ENCODE measurements at regions of chr1 and their contacts with region 1.

Region 1: DNA sequence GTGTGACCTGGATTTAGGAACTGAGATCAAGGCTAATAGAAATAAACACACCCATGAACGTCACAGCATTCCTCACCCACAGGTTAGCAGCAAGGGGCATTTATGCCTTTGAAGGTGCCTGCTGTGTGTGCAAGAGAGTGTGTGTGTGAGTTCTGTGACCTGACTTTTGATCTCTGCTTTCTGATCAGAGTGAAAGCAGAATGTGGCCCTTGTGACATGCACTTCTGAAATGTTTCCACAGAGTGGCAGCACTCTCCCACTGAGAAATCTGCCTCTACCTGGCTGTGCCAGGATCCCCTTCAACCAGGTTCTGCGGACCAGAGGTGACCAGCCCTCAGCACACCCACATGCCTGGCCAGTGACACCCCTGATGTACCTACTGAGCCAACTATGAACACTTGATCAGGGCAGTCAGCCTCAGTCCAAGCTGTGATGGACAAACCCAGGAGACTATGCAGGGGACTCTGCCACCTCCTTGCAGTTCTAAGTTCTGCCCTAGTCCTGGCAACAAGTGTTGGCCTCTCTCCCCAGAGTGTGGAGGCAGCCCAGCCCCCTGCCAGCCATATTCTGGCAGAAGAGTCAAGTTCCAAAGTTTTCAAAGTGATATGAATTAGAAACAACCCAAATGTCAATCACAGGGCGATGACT is 41.0 kb downstream of the RXRG start:
- DNase-seq: peak in 1 of 5 donors; percentile 29
- ATAC-seq: peak in 3 of 4 donors; percentile 52 to 62 (median 61)
- H3K4me3 ChIP-seq: no peak overlapping the region
- H3K27ac ChIP-seq: no peak overlapping the region
- H3K4me1 ChIP-seq: peaks cover 0 to 4% (median 0%) of the 10 kb centered on the region in 12 donors
- H3K27me3 ChIP-seq: peaks cover 0 to 14% (median 0%) of the 10 kb centered on the region in 9 donors
- CTCF ChIP-seq: peak; percentile 40 to 72 (median 65)
- POLR2A ChIP-seq: no peak

Region 2: DNA sequence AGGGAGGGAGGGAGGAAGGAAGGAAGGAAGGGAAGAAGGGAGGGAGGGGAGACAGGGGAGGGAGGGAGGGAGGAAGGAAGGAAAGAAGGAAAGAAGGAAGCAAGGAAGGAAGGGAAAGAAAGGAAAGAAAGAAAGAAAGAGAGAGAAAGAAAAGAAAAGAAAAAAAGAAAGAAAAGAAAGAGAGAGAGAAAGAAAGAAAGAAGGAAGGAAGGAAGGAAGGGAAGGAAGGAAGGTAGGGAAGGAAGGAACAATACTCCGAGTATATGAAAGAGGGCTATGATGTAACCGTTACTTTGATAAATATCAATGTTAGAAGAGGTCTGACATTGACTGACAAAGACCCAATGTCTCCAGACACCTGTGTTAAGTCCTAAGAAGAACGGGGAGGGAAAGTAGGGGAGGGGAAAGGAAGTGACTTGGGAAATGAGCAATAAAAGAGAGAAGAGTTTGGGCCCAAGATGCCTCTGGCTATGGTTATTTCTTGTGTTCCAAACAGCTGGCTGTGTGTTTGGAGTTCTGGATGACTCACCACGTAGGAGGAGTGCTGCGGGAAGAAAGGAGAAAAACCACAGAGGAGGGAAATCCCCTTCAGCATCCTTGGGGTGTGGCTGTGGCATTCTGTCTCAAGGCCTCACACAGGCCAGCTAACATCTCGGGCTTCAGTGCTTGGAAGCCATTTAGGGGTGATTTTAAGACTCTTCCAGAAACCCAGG is 78.0 kb after region 1 on chr1:
- intact Hi-C with region 1: no loop called
- DNase-seq: peak in 4 of 5 donors; percentile 45 to 58 (median 50)
- ATAC-seq: peak; percentile 80 to 92 (median 88)
- H3K4me3 ChIP-seq: no peak overlapping the region
- H3K27ac ChIP-seq: peak overlapping the region in 5 of 12 donors; percentile 5 to 60 (median 46)
- H3K4me1 ChIP-seq: peaks cover 0 to 29% (median 12%) of the 10 kb centered on the region in 12 donors
- H3K27me3 ChIP-seq: no peaks in the 10 kb centered on the region
- CTCF ChIP-seq: no peak
- POLR2A ChIP-seq: no peak

Region 3: GRCh38 chr1:165496501-165496900 is 92.5 kb after region 1 on chr1:
- intact Hi-C with region 1: loop called in 1 of 10 experiments (anchors 5 kb)
- DNase-seq: peak in 3 of 5 donors; percentile 24 to 55 (median 40)
- ATAC-seq: peak in 3 of 4 donors; percentile 57 to 77 (median 64)
- H3K4me3 ChIP-seq: no peak overlapping the region
- H3K27ac ChIP-seq: peak overlapping the region in 2 of 12 donors; percentile 41 to 53
- H3K4me1 ChIP-seq: peaks cover 0 to 10% (median 0%) of the 10 kb centered on the region in 12 donors
- H3K27me3 ChIP-seq: no peaks in the 10 kb centered on the region
- CTCF ChIP-seq: no peak
- POLR2A ChIP-seq: no peak

Measured in heart left ventricle (tissue), 16 donors.